Activated CD4-positive, alpha-beta T cell treated with anti-CD3 and anti-CD28 coated beads for 36 hours (primary cell): ENCODE measurements at regions of chr13 and their contacts with region 1.

Region 1: DNA sequence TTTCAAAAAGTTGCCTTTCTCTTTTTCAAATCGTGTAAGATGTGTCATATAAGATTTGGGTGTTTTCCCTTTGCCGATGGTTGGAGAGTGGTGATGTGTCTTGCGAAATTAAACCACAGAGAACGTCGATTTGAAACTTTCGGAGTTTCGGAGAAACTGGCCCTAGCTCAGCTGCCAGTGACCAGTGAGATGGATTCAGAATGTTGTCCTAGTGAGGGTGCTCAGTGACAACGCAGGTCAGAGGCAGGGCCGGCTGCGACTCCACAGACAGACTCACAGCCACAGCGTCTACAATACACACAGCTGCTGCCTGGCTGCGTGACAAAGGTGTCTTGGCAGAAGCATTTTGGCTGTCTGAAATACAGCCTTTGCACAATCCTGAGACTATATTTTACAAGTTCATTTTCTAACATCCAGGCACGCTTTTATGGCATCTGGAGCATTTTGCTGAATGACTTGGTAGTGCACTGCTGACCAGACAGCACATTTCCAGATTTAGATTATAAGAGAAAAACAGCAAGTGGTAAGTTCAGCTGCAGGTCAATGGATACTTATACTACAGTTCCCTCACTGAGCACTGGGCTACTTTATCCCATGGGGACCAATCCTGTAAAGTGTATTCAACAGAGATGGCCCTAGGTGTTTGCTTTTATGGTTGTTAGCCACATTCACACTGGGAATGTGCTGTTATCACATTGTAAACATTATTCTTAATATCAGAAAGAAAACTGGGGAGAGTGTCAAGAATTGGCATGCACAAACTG is 207.5 kb downstream of the KCNRG start:
- DNase-seq: peak; percentile 28
- ATAC-seq: no peak
- H3K4me3 Mint-ChIP-seq: no peak overlapping the region
- H3K27ac Mint-ChIP-seq: no peak overlapping the region
- H3K4me1 Mint-ChIP-seq: peaks cover 46% of the 10 kb centered on the region
- H3K27me3 Mint-ChIP-seq: peaks cover 33% of the 10 kb centered on the region

Region 2: GRCh38 chr13:49580980-49581680 is 641.6 kb before region 1 on chr13:
- CTCF ChIA-PET with region 1: no interaction called
- POLR2A ChIA-PET with region 1: no interaction called
- intact Hi-C with region 1: no loop called
- DNase-seq: no peak
- ATAC-seq: no peak
- H3K4me3 Mint-ChIP-seq: no peak overlapping the region
- H3K27ac Mint-ChIP-seq: peak overlapping the region; percentile 14
- H3K4me1 Mint-ChIP-seq: peaks cover 25% of the 10 kb centered on the region
- H3K27me3 Mint-ChIP-seq: no peaks in the 10 kb centered on the region

Region 3: GRCh38 chr13:50123862-50124536 is 98.8 kb before region 1 on chr13:
- CTCF ChIA-PET with region 1: interaction called, 5 read pairs
- POLR2A ChIA-PET with region 1: interaction called, 6 read pairs
- intact Hi-C with region 1: loop called in 1 of 2 experiments (anchors 5 kb)
- DNase-seq: peak; percentile 86
- ATAC-seq: peak; percentile 68
- H3K4me3 Mint-ChIP-seq: peak overlapping the region; percentile 72
- H3K27ac Mint-ChIP-seq: peak overlapping the region; percentile 89
- H3K4me1 Mint-ChIP-seq: peaks cover 49% of the 10 kb centered on the region
- H3K27me3 Mint-ChIP-seq: peaks cover 13% of the 10 kb centered on the region

Region 4: DNA sequence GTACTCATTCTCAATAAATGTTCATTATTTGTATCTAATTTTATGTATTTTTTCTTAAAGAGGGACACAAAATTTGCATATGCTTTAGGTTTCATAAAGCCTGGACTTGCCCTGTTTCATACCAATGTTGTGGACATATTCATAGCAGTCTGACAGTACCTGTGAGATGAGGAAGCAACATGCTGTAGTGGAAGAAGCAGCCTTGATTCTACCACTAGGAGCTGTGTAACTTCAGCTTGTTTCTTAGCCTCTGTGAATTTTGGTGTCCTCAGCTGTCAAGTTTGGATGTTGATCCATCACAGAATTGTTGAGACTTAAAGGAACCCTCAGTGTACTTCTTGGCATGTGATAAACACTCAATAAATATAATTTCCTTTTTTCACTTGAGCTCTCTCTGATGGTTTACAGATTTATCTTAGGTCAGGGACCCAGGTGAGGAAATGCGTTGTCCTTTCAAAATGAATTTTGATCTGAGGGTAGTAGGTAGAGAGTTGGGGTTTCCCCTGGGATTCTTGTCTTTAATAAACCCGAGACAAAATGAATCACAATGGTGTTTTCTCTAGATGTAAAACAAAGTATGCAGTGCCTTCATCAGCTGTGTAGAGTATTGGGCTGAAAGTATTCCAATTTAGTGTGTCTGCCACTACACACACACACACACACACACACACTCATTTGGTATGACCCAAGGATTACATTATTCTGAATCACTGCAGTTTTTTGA is 55.4 kb before region 1 on chr13:
- CTCF ChIA-PET with region 1: no interaction called
- POLR2A ChIA-PET with region 1: no interaction called
- intact Hi-C with region 1: loop called (anchors 1 to 2 kb)
- DNase-seq: peak; percentile 24
- ATAC-seq: peak; percentile 91
- H3K4me3 Mint-ChIP-seq: no peak overlapping the region
- H3K27ac Mint-ChIP-seq: no peak overlapping the region
- H3K4me1 Mint-ChIP-seq: peaks cover 14% of the 10 kb centered on the region
- H3K27me3 Mint-ChIP-seq: peaks cover 16% of the 10 kb centered on the region

Region 5: GRCh38 chr13:50244713-50245574 is 22.2 kb after region 1 on chr13:
- CTCF ChIA-PET with region 1: interaction called, 3 read pairs
- POLR2A ChIA-PET with region 1: interaction called, 7 read pairs
- intact Hi-C with region 1: loop called (anchors 1 kb)
- DNase-seq: peak; percentile 80
- ATAC-seq: peak; percentile 97
- H3K4me3 Mint-ChIP-seq: no peak overlapping the region
- H3K27ac Mint-ChIP-seq: no peak overlapping the region
- H3K4me1 Mint-ChIP-seq: peaks cover 36% of the 10 kb centered on the region
- H3K27me3 Mint-ChIP-seq: peaks cover 25% of the 10 kb centered on the region

Region 6: GRCh38 chr13:50255639-50256038 is 32.9 kb after region 1 on chr13:
- CTCF ChIA-PET with region 1: no interaction called
- POLR2A ChIA-PET with region 1: no interaction called
- intact Hi-C with region 1: loop called in 1 of 2 experiments (anchors 5 kb)
- DNase-seq: no peak
- ATAC-seq: peak; percentile 42
- H3K4me3 Mint-ChIP-seq: no peak overlapping the region
- H3K27ac Mint-ChIP-seq: no peak overlapping the region
- H3K4me1 Mint-ChIP-seq: peaks cover 32% of the 10 kb centered on the region
- H3K27me3 Mint-ChIP-seq: peaks cover 36% of the 10 kb centered on the region